Activated CD4-positive, alpha-beta T cell treated with anti-CD3 and anti-CD28 coated beads, Interleukin-2, amount 10 ng/mL, durations not matched to agents 24 days and 14 days (primary cell): ENCODE measurements at regions of chr15 and their contacts with region 1.

Region 1: GRCh38 chr15:93331545-93332167 is 242.6 kb upstream of the RGMA start:
- DNase-seq: no peak
- H3K4me3 Mint-ChIP-seq: no peak overlapping the region
- H3K27ac Mint-ChIP-seq: no peak overlapping the region
- H3K4me1 Mint-ChIP-seq: no peaks in the 10 kb centered on the region
- H3K27me3 Mint-ChIP-seq: peaks cover 27% of the 10 kb centered on the region

Region 2: GRCh38 chr15:93087825-93088199 is 243.8 kb before region 1 on chr15:
- intact Hi-C with region 1: loop called (anchors 10 kb)
- DNase-seq: peak; percentile 91
- H3K4me3 Mint-ChIP-seq: peak overlapping the region; percentile 82
- H3K27ac Mint-ChIP-seq: peak overlapping the region; percentile 22
- H3K4me1 Mint-ChIP-seq: peaks cover 10% of the 10 kb centered on the region
- H3K27me3 Mint-ChIP-seq: peaks cover 68% of the 10 kb centered on the region

Region 3: DNA sequence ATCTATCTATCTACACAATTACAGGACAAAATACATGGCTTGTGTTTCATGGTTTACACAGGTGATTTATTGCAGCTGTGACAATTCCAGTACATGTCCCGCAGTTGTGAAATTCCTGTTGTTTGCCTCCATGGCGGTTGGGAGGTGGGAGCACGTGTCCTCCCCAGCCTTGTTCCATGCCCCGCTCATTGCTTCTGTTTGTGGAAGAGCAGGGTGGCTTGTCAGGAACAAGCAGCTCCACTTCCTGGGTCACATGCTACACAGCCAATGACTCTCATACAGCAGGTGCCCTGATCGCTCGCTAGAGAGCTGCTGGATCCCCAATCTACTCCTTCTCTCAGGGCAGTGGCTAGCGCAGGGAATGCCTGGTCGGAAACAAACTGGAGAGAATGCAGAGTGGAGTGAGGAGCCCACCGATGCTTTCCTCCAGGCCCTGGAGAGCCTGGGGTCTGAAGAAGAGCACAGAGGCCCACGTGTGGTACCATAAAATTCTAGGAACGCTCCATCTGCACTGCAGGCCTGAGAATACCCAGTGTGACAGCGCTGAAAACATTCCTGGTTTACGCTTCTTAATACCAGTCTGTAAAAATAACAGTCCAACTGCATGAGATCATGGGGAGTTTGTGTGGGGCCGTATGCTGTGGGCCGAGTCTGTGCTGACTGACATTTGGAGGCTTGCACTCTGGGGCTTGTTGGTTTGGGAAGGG is 27.9 kb after region 1 on chr15:
- intact Hi-C with region 1: no loop called
- DNase-seq: no peak
- H3K4me3 Mint-ChIP-seq: no peak overlapping the region
- H3K27ac Mint-ChIP-seq: no peak overlapping the region
- H3K4me1 Mint-ChIP-seq: no peaks in the 10 kb centered on the region
- H3K27me3 Mint-ChIP-seq: no peaks in the 10 kb centered on the region